ENCODE measurements at regions of chr6 and their contacts with region 1.

Region 1: GRCh38 chr6:139219271-139219729 is 72.5 kb downstream of the TXLNB start:
- DNase-seq: peak; percentile 87
- H3K4me3 Mint-ChIP-seq: peak overlapping the region; percentile 5
- H3K27ac Mint-ChIP-seq: no peak overlapping the region
- H3K4me1 Mint-ChIP-seq: peaks cover 9% of the 10 kb centered on the region
- H3K27me3 Mint-ChIP-seq: no peaks in the 10 kb centered on the region

Region 2: GRCh38 chr6:138970159-138970558 is 249.1 kb before region 1 on chr6:
- CTCF ChIA-PET with region 1: no interaction called
- intact Hi-C with region 1: no loop called
- DNase-seq: no peak
- H3K4me3 Mint-ChIP-seq: no peak overlapping the region
- H3K27ac Mint-ChIP-seq: no peak overlapping the region
- H3K4me1 Mint-ChIP-seq: peaks cover 66% of the 10 kb centered on the region
- H3K27me3 Mint-ChIP-seq: no peaks in the 10 kb centered on the region

Region 3: DNA sequence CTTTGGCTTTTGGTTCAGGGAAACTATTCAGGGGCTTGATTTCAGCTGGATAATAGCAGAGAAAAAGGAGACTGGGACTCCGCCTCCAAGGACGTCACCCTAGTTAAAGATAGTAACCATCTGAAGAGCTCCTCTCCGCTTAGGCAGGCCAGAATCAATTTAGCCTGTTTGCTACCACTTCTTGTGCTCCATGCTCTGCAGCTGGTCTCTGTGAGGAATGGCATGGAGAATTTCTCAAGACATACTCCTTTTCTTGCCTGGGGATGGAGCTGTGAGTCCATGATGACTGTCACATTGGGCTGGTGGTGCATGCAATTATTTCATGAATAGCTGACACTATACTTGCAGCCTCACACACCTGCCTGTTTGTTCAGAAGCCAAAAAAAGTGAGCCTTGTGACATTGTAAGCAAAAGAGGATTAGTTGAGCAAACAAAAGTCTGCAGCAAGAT is 11.1 kb after region 1 on chr6:
- CTCF ChIA-PET with region 1: interaction called, 13 read pairs
- intact Hi-C with region 1: no loop called
- DNase-seq: peak; percentile 46
- H3K4me3 Mint-ChIP-seq: no peak overlapping the region
- H3K27ac Mint-ChIP-seq: no peak overlapping the region
- H3K4me1 Mint-ChIP-seq: peaks cover 5% of the 10 kb centered on the region
- H3K27me3 Mint-ChIP-seq: no peaks in the 10 kb centered on the region

Region 4: GRCh38 chr6:139355172-139355571 is 135.9 kb after region 1 on chr6:
- CTCF ChIA-PET with region 1: interaction called, 46 read pairs
- intact Hi-C with region 1: no loop called
- DNase-seq: no peak
- H3K4me3 Mint-ChIP-seq: no peak overlapping the region
- H3K27ac Mint-ChIP-seq: no peak overlapping the region
- H3K4me1 Mint-ChIP-seq: peaks cover 7% of the 10 kb centered on the region
- H3K27me3 Mint-ChIP-seq: no peaks in the 10 kb centered on the region

Region 5: DNA sequence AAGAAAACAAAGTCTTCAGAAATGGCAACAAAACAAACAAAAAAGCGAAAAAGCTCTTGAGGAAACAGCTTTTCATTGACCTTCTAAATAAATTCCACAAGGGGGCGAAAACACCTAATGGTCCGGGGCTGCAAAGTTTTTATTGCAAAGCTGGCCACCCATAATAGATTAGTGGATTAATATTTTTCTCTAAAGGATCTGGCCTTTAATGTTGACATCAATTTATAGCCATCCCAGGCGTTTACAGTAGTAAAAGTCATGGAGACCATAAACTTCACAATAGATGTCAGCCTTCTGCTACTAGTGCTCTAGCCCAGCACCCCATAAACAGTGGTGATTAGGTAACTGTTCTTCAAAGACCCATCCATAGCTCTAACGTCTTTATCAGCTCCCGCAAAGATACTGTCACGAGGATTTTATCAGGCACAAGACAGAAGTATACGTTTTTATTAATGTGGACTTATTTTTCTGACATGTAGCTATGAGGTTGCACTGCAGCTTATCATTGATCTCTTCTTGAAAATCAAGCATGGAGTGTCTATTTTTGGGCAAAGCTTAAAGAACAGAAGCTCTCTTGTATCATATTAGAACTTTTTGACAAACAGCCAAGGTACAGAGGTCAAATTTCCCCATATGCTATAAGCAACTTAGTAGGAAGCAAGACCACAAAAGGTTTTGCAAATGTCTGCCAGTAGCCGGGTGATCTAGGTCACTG is 150.4 kb after region 1 on chr6:
- CTCF ChIA-PET with region 1: interaction called, 84 read pairs
- intact Hi-C with region 1: loop called (anchors 1 kb)
- DNase-seq: peak; percentile 29
- H3K4me3 Mint-ChIP-seq: peak overlapping the region; percentile 59
- H3K27ac Mint-ChIP-seq: peak overlapping the region; percentile 85
- H3K4me1 Mint-ChIP-seq: peaks cover 42% of the 10 kb centered on the region
- H3K27me3 Mint-ChIP-seq: no peaks in the 10 kb centered on the region